PC-9 (cell line): ENCODE measurements at regions of chr1 and their contacts with region 1.

Region 1: DNA sequence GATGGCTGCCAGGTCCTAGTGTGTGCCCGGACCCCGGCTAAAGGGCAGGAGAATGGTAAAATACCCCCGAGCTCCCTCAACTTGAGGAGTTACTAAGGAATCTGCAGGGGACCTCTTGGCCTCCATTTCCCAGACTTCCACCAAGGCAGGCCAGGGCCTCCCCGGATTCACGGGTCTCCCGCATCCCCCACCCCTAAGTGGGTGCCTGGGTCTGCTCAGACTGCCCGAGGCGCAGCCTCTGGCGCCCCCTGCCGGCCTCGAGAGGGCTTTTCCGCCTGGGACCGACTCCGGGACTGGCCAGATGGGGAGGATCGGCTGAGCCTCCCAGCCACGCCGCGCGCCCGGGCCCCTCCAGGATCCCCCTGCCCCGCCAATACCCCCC is 1.7 kb downstream of the PLEKHG5 start:
- DNase-seq: peak in 1 of 2 experiments; percentile 79
- H3K4me3 ChIP-seq: peak overlapping the region; percentile 89
- H3K27ac ChIP-seq: peak overlapping the region; percentile 89; the same call in 1 of the 2 replicates
- H3K4me1 ChIP-seq: peaks cover 19% of the 10 kb centered on the region
- H3K27me3 ChIP-seq: no peaks in the 10 kb centered on the region
- CTCF ChIP-seq: peak; percentile 91

Region 2: DNA sequence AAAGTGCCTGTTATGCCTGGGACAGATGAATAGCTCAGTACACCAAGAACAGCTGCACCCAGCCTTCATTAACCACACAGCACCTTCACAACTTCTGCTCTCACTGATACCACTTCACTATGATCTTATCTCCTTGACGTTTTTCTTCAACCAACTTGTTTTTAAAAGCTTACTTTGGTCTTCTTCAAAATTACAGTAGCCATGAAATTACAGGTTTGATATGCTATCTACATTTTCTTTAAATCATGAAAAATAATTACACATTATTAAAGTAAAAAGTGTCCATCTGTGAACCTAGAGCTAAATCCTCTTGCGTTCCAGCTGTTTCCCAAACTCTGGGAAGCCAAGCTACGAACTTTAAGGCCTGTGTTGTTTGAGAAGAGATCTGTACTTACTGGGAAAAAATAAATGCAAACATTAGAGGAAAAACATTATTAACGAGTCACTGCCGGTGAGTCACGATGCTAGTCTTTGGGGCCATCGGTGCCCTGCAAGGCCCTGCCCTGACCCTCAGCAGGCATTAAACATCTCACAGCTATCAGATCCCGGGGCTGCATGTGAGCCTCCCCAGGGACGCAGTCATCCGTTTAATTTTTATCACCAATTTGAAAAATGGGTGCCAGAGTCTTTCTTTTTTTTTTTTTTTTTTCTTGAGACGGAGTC is 172.6 kb before region 1 on chr1:
- CTCF ChIA-PET with region 1: no interaction called
- POLR2A ChIA-PET with region 1: no interaction called
- intact Hi-C with region 1: no loop called
- DNase-seq: peak in 1 of 2 experiments; percentile 26
- H3K4me3 ChIP-seq: no peak overlapping the region
- H3K27ac ChIP-seq: peak overlapping the region; percentile 58
- H3K4me1 ChIP-seq: no peaks in the 10 kb centered on the region
- H3K27me3 ChIP-seq: no peaks in the 10 kb centered on the region
- CTCF ChIP-seq: no peak

Region 3: GRCh38 chr1:6350416-6351088 is 139.2 kb before region 1 on chr1:
- CTCF ChIA-PET with region 1: no interaction called
- POLR2A ChIA-PET with region 1: no interaction called
- intact Hi-C with region 1: loop called (anchors 5 kb)
- DNase-seq: peak; percentile 64 to 81
- H3K4me3 ChIP-seq: no peak overlapping the region
- H3K27ac ChIP-seq: no peak overlapping the region
- H3K4me1 ChIP-seq: peaks cover 9% of the 10 kb centered on the region; the same call in 1 of the 2 replicates
- H3K27me3 ChIP-seq: no peaks in the 10 kb centered on the region
- CTCF ChIP-seq: no peak

Region 4: GRCh38 chr1:6513320-6513801 is 23.6 kb after region 1 on chr1:
- CTCF ChIA-PET with region 1: interaction called, 5 read pairs
- POLR2A ChIA-PET with region 1: no interaction called
- intact Hi-C with region 1: loop called (anchors 2 kb)
- DNase-seq: peak; percentile 54 to 75
- H3K4me3 ChIP-seq: no peak overlapping the region
- H3K27ac ChIP-seq: no peak overlapping the region
- H3K4me1 ChIP-seq: peaks cover 5% of the 10 kb centered on the region; the same call in 1 of the 2 replicates
- H3K27me3 ChIP-seq: no peaks in the 10 kb centered on the region
- CTCF ChIP-seq: no peak

Region 5: GRCh38 chr1:6523566-6523965 is 33.8 kb after region 1 on chr1:
- CTCF ChIA-PET with region 1: interaction called, 8 read pairs
- POLR2A ChIA-PET with region 1: no interaction called
- intact Hi-C with region 1: loop called (anchors 2 kb)
- DNase-seq: peak in 1 of 2 experiments; percentile 18
- H3K4me3 ChIP-seq: no peak overlapping the region
- H3K27ac ChIP-seq: no peak overlapping the region
- H3K4me1 ChIP-seq: no peaks in the 10 kb centered on the region
- H3K27me3 ChIP-seq: no peaks in the 10 kb centered on the region
- CTCF ChIP-seq: peak; percentile 46; the same call in 1 of the 2 replicates

Region 6: DNA sequence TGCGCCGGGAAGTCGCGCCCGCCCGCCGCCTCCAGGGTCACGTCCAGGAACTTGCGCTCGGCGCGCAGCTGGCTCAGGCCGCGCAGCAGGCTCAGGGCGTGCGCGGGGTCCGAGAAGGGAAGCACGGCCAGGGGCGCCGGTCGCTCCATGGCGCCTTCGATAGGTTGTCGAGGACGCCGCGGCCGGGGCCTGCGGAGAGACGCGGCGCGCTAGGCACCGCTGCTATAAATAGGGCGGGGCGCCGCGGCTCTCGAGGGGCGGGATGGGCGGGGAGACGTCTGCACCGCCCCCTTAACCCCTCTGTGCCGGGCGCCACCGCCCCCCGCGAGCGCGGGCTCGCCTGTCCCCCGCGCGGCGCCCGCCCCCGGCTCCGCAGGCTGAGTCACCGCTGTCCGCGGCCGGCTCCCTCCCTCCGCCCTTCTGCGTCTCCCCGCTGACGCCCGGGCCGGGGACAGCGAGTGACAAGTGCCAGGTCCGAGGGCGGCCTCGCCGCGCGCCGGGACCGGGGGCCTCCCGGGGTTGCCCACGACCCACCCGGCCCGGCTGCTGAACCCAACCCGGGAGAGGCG is 113.0 kb after region 1 on chr1 and contains the start of gene KLHL21:
- CTCF ChIA-PET with region 1: interaction called, 3 read pairs
- POLR2A ChIA-PET with region 1: interaction called, 4 read pairs
- intact Hi-C with region 1: loop called (anchors 5 kb)
- DNase-seq: peak; percentile 54 to 90
- H3K4me3 ChIP-seq: peak within 1 kb of the TSS; percentile 86
- H3K27ac ChIP-seq: peak within 1 kb of the TSS; percentile 84
- H3K4me1 ChIP-seq: no peaks in the 10 kb centered on the region
- H3K27me3 ChIP-seq: no peaks in the 10 kb centered on the region
- CTCF ChIP-seq: no peak
- total RNA-seq, gene KLHL21: 20.6 and 24.4 TPM in 2 replicates